ENCODE measurements at regions of chr19 and their contacts with region 1.

Region 1: GRCh38 chr19:11987405-11988281 is 22.8 kb downstream of the ZNF763 start:
- DNase-seq: peak; percentile 91
- ATAC-seq: peak; percentile 99
- H3K4me3 ChIP-seq: peak overlapping the region; percentile 93
- H3K27ac ChIP-seq: peak overlapping the region; percentile 93
- H3K4me1 ChIP-seq: peaks cover 2% of the 10 kb centered on the region; the same call in 1 of the 2 replicates
- H3K27me3 ChIP-seq: no peaks in the 10 kb centered on the region
- CTCF ChIP-seq: no peak
- POLR2A ChIP-seq: peak; percentile 90
- RAD21 ChIP-seq: no peak

Region 2: DNA sequence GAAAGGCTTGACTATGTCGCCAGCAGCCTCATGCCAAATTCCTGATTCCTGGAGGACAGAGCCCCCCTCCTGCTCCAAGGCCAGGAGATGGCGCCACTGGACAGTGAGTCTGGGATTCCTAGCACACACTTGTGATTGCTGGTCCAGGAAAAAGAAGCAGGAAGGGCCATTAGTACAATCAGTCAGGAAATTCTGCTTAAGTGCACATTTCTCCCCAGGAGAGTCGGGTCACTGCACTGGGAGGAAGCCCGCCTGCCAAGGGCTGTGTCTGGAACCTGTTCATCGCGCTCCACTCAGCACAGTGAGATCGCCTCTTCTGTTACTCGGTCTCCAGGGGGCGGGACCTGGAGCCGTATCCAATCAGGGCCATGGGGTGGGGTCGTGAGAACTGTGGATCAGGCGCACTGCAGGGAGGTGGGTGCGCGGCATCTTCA is 314.0 kb before region 1 on chr19:
- CTCF ChIA-PET with region 1: no interaction called
- POLR2A ChIA-PET with region 1: no interaction called
- dilution Hi-C with region 1: no loop called
- in situ Hi-C with region 1: no loop called
- intact Hi-C with region 1: loop called (anchors 10 kb)
- DNase-seq: peak; percentile 55
- ATAC-seq: peak; percentile 98
- H3K4me3 ChIP-seq: peak overlapping the region; percentile 63
- H3K27ac ChIP-seq: no peak overlapping the region
- H3K4me1 ChIP-seq: no peaks in the 10 kb centered on the region
- H3K27me3 ChIP-seq: no peaks in the 10 kb centered on the region
- CTCF ChIP-seq: peak; percentile 68
- POLR2A ChIP-seq: no peak
- RAD21 ChIP-seq: peak; percentile 58

Region 3: GRCh38 chr19:11881151-11881800 is 106.4 kb before region 1 on chr19:
- CTCF ChIA-PET with region 1: interaction called, 3 read pairs
- POLR2A ChIA-PET with region 1: no interaction called
- dilution Hi-C with region 1: no loop called
- in situ Hi-C with region 1: no loop called
- intact Hi-C with region 1: loop called (anchors 1 kb)
- DNase-seq: peak; percentile 51
- ATAC-seq: peak; percentile 87
- H3K4me3 ChIP-seq: no peak overlapping the region
- H3K27ac ChIP-seq: no peak overlapping the region
- H3K4me1 ChIP-seq: no peaks in the 10 kb centered on the region
- H3K27me3 ChIP-seq: no peaks in the 10 kb centered on the region
- CTCF ChIP-seq: peak; percentile 70
- POLR2A ChIP-seq: no peak
- RAD21 ChIP-seq: peak; percentile 88

Region 4: GRCh38 chr19:11964858-11965645 is 22.6 kb before region 1 on chr19 and contains the start of gene ZNF763:
- CTCF ChIA-PET with region 1: interaction called, 3 read pairs
- POLR2A ChIA-PET with region 1: interaction called, 4 read pairs
- dilution Hi-C with region 1: no loop called
- in situ Hi-C with region 1: no loop called
- intact Hi-C with region 1: loop called (anchors 1 kb)
- DNase-seq: peak; percentile 75
- ATAC-seq: peak; percentile 95
- H3K4me3 ChIP-seq: peak within 1 kb of the TSS; percentile 77
- H3K27ac ChIP-seq: peak within 1 kb of the TSS; percentile 78
- H3K4me1 ChIP-seq: peaks cover 2% of the 10 kb centered on the region; the same call in 1 of the 2 replicates
- H3K27me3 ChIP-seq: no peaks in the 10 kb centered on the region
- CTCF ChIP-seq: no peak
- POLR2A ChIP-seq: peak; percentile 21; the same call in 1 of the 2 replicates
- RAD21 ChIP-seq: no peak
- total RNA-seq, gene ZNF763: 0.56 and 0.90 TPM in 2 replicates

Region 5: GRCh38 chr19:12617646-12618045 is 630.0 kb after region 1 on chr19:
- CTCF ChIA-PET with region 1: no interaction called
- POLR2A ChIA-PET with region 1: interaction called, 14 read pairs
- dilution Hi-C with region 1: no loop called
- in situ Hi-C with region 1: no loop called
- intact Hi-C with region 1: no loop called
- DNase-seq: no peak
- ATAC-seq: no peak
- H3K4me3 ChIP-seq: no peak overlapping the region
- H3K27ac ChIP-seq: no peak overlapping the region
- H3K4me1 ChIP-seq: peaks cover 3% of the 10 kb centered on the region
- H3K27me3 ChIP-seq: no peaks in the 10 kb centered on the region
- CTCF ChIP-seq: no peak
- POLR2A ChIP-seq: no peak
- RAD21 ChIP-seq: no peak